ENCODE measurements at regions of chrX and their contacts with region 1.

Region 1: DNA sequence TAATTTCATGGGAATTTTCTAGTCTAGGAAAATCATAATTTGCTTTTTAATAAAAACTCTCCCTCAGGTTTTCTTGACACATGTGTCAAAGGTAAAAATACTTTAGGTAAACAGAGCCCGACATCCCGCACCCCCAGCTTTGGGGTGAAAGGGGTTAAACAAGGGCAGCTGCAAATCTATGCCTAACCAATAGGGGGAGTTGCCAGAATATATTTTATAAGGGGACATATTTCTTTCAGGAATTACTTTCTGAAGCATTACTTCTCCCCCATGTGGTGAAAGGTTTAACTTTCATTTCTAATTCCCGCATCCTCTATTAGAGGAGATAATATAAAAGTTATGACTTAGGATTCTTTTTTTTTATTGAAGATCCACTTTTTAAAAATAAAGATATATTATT is 53.9 kb upstream of the HEPH start:
- DNase-seq: no peak
- ATAC-seq: peak; percentile 57
- H3K4me3 Mint-ChIP-seq: no peak overlapping the region
- H3K27ac Mint-ChIP-seq: no peak overlapping the region
- H3K4me1 Mint-ChIP-seq: peaks cover 6% of the 10 kb centered on the region
- H3K27me3 Mint-ChIP-seq: no peaks in the 10 kb centered on the region
- CTCF ChIP-seq: no peak

Region 2: GRCh38 chrX:65581661-65582339 is 528.3 kb before region 1 on chrX:
- CTCF ChIA-PET with region 1: interaction called, 13 read pairs
- POLR2A ChIA-PET with region 1: no interaction called
- intact Hi-C with region 1: loop called (anchors 1 kb)
- DNase-seq: no peak
- ATAC-seq: peak; percentile 67
- H3K4me3 Mint-ChIP-seq: no peak overlapping the region
- H3K27ac Mint-ChIP-seq: no peak overlapping the region
- H3K4me1 Mint-ChIP-seq: peaks cover 12% of the 10 kb centered on the region
- H3K27me3 Mint-ChIP-seq: no peaks in the 10 kb centered on the region
- CTCF ChIP-seq: no peak

Region 3: GRCh38 chrX:65745992-65746391 is 364.1 kb before region 1 on chrX:
- CTCF ChIA-PET with region 1: no interaction called
- POLR2A ChIA-PET with region 1: no interaction called
- intact Hi-C with region 1: loop called (anchors 5 kb)
- DNase-seq: no peak
- ATAC-seq: no peak
- H3K4me3 Mint-ChIP-seq: no peak overlapping the region
- H3K27ac Mint-ChIP-seq: peak overlapping the region; percentile 0
- H3K4me1 Mint-ChIP-seq: peaks cover 40% of the 10 kb centered on the region
- H3K27me3 Mint-ChIP-seq: no peaks in the 10 kb centered on the region
- CTCF ChIP-seq: no peak

Region 4: DNA sequence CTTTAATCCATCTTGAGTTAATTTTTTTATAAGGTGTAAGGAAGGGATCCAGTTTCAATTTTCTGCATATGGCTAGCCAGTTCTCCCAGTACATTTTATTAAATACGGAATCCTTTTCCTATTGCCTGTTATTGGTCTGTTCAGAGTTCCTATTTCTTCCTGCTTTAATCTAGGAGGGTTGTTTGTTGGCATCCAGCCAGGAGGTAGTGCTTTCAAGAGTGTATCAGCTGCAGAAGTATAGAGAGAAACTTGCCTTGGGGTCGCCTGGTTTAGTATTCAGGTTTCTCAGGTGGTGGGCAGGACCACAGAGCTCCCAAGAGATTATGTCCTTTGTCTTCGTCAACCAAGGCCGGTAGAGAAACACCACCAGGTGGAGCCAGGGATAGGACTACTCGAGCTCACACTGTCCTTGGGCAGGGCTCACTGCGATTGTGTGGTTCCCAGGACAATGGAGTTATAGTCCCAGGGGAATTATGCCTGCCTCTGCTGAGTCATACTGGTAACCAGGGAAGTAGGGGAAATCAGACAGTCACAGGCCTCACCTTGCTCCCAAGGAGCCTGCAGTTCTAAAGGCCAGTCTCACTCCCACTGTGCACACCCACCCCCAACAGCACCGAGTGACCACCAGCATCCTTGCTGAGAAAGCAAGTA is 238.3 kb before region 1 on chrX:
- CTCF ChIA-PET with region 1: interaction called, 3 read pairs
- POLR2A ChIA-PET with region 1: no interaction called
- intact Hi-C with region 1: loop called (anchors 1 kb)
- DNase-seq: no peak
- ATAC-seq: peak; percentile 40
- H3K4me3 Mint-ChIP-seq: no peak overlapping the region
- H3K27ac Mint-ChIP-seq: no peak overlapping the region
- H3K4me1 Mint-ChIP-seq: peaks cover 18% of the 10 kb centered on the region
- H3K27me3 Mint-ChIP-seq: no peaks in the 10 kb centered on the region
- CTCF ChIP-seq: no peak

Region 5: GRCh38 chrX:65985922-65986588 is 124.1 kb before region 1 on chrX:
- CTCF ChIA-PET with region 1: interaction called, 6 read pairs
- POLR2A ChIA-PET with region 1: interaction called, 3 read pairs
- intact Hi-C with region 1: loop called (anchors 2 kb)
- DNase-seq: no peak
- ATAC-seq: peak; percentile 92
- H3K4me3 Mint-ChIP-seq: no peak overlapping the region
- H3K27ac Mint-ChIP-seq: peak overlapping the region; percentile 74
- H3K4me1 Mint-ChIP-seq: peaks cover 43% of the 10 kb centered on the region
- H3K27me3 Mint-ChIP-seq: no peaks in the 10 kb centered on the region
- CTCF ChIP-seq: no peak

Region 6: DNA sequence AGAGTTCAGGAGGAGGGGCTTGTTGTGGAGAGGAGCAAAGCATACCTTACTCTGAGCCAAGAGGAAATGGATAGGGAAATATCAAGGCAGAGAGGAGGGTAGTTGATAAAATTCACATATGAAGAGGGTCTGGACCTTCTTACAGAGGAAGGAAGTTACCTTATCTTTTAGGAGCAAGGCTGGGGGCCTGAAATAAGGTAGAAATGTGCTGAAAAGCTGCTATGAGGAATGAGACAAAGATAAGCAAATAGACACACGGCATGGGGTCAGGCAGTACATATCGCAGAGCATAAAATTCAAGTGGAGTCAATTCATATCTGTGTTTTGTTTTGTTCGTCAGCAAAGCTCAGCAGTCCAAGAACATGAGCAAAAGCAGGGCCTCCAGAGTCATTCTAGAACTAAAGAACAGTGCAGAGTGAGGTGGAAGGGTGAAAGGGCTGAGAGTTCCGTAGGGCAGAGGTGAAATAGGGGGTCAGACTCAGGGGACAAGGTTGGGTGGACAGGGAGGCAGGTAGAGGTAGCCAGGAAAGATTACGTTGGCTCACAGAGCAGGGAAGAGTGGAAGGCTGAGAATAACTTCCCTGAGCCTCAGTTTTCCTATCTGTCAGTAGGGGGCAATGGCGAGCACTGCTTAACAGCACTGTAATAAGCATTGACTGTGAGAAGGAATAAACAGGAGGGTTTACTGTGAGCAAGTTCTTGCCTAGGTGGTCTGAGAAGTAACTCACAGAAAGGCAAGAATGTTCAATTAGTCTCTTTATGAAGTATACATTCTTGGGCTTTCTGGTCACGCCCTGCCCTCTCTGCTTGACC is 79.4 kb before region 1 on chrX:
- CTCF ChIA-PET with region 1: interaction called, 15 read pairs
- POLR2A ChIA-PET with region 1: no interaction called
- intact Hi-C with region 1: no loop called
- DNase-seq: no peak
- ATAC-seq: peak; percentile 75
- H3K4me3 Mint-ChIP-seq: no peak overlapping the region
- H3K27ac Mint-ChIP-seq: no peak overlapping the region
- H3K4me1 Mint-ChIP-seq: peaks cover 5% of the 10 kb centered on the region
- H3K27me3 Mint-ChIP-seq: no peaks in the 10 kb centered on the region
- CTCF ChIP-seq: no peak

Region 7: DNA sequence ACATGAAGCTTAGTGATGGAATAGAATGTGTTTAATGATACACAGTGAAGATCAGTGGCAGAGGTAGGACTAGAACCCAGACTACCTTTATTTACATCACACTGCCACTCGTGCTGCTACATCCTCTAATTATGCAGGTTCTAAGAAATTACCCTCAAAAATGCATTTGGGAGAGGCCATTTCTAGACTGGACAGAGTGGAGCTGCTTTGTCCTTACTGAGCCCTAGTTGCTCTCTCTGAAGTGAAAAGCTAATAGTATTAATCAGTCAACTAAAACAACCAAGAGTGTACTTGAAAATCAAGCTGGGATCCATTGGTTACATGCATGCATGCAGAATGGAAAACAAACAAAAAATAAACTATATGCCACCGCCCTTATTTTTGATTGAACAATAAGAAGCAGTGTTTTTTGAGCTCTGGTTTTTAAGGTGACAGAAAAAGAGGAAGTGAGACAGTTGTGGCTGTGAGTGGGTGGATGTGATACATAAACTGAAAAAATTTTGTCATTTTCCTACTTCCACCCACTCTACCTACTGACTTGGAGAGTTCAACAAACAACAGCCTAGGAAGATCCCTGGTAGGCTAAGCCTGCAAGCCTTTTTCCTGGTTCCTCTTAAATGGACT is 63.4 kb before region 1 on chrX:
- CTCF ChIA-PET with region 1: interaction called, 8 read pairs
- POLR2A ChIA-PET with region 1: no interaction called
- intact Hi-C with region 1: loop called (anchors 10 kb)
- DNase-seq: no peak
- ATAC-seq: peak; percentile 81
- H3K4me3 Mint-ChIP-seq: peak overlapping the region; percentile 28
- H3K27ac Mint-ChIP-seq: peak overlapping the region; percentile 83
- H3K4me1 Mint-ChIP-seq: peaks cover 45% of the 10 kb centered on the region
- H3K27me3 Mint-ChIP-seq: no peaks in the 10 kb centered on the region
- CTCF ChIP-seq: no peak

Region 8: GRCh38 chrX:66233209-66233608 is 123.1 kb after region 1 on chrX:
- CTCF ChIA-PET with region 1: no interaction called
- POLR2A ChIA-PET with region 1: no interaction called
- intact Hi-C with region 1: no loop called
- DNase-seq: no peak
- ATAC-seq: no peak
- H3K4me3 Mint-ChIP-seq: no peak overlapping the region
- H3K27ac Mint-ChIP-seq: no peak overlapping the region
- H3K4me1 Mint-ChIP-seq: no peaks in the 10 kb centered on the region
- H3K27me3 Mint-ChIP-seq: peaks cover 1% of the 10 kb centered on the region
- CTCF ChIP-seq: no peak